Activated CD8-positive, alpha-beta memory T cell treated with anti-CD3 and anti-CD28 coated beads, Interleukin-2, amount 10 ng/mL, durations not matched to agents 7 days and 5 days (primary cell): ENCODE measurements at regions of chr11 and their contacts with region 1.

Region 1: DNA sequence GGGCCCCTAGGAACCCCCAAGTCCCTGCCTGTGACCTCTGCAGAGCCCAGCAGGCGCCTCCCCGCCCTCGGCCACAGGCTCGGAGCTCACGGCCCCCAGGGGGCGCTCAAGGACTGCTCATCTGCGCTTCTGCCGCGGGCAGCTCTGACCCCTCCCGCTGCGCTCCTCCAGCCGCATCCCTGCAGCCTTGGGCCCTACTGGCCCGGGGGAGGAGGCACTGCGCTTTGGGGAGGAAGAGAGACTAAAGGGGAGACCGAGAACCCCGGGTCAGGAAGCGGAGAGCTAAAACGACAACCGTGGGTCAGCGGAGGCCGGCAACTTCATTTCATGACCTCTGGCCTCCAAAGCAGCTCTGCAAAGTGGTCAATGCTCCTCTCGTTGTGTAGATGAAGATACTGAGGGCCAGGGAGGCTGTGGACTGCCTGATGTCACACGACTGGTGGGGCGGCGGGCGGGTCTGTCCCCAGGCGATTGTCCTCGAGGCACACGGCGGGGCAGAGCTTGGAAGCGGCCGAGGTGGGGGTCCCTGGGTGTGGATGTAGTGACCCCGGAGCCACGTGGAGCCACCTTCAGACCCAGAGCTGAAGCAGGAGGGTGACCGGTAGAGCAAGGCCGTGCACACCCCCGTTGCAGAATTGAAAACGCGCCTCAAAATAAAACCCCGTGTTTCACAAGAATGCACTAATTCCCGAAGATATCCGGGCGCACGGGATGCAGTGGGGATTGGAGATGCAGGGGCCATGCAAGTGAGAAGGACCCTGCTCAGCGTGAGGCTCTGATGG is 2.7 kb upstream of the KRTAP5-6 start:
- DNase-seq: peak; percentile 84
- ATAC-seq: peak; percentile 91
- H3K4me3 Mint-ChIP-seq: no peak overlapping the region
- H3K27ac Mint-ChIP-seq: no peak overlapping the region
- H3K4me1 Mint-ChIP-seq: peaks cover 9% of the 10 kb centered on the region
- H3K27me3 Mint-ChIP-seq: peaks cover 57% of the 10 kb centered on the region

Region 2: GRCh38 chr11:1682225-1682905 is 11.9 kb before region 1 on chr11:
- CTCF ChIA-PET with region 1: interaction called, 24 read pairs
- DNase-seq: no peak
- ATAC-seq: no peak
- H3K4me3 Mint-ChIP-seq: no peak overlapping the region
- H3K27ac Mint-ChIP-seq: no peak overlapping the region
- H3K4me1 Mint-ChIP-seq: no peaks in the 10 kb centered on the region
- H3K27me3 Mint-ChIP-seq: peaks cover 6% of the 10 kb centered on the region

Region 3: DNA sequence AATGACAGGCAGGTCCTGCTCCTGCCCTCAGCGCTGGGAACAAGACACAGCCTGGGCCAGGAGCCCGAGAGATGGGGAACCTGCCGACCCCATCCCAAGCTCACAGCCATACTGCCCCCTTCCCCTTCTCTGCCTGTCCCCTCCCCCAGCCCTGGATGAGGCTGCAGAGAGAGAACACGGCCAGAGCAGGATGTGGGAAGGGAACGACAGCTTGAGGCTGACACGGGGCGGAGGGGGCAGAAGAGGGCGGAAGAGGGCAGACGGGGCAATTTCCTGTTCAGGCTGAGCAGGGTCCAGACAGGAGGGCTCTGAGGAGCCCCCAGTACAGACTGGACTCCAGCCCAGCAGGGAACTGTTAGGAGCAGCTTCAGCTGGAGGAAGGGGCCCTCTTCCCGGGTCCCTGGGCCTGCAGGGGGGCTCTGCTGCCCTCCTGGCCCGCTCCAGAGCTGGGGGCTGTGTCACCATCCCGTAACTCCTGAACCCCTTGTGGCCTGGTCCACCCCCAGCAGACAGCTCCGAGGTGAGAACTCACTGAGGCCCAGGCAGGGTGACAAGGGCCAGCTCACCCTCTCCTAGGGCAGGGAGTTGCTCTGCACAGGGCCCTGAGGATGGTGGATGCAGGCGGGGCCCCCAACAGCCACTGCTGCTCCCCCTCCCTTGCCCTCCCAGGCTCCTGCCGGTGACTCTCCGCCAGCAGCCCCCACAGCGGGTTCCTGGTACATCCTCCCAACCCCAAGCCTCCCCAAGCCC is 63.8 kb after region 1 on chr11:
- CTCF ChIA-PET with region 1: interaction called, 26 read pairs
- DNase-seq: peak; percentile 89
- ATAC-seq: peak; percentile 83
- H3K4me3 Mint-ChIP-seq: peak overlapping the region; percentile 67
- H3K27ac Mint-ChIP-seq: peak overlapping the region; percentile 94
- H3K4me1 Mint-ChIP-seq: peaks cover 67% of the 10 kb centered on the region
- H3K27me3 Mint-ChIP-seq: no peaks in the 10 kb centered on the region

Region 4: DNA sequence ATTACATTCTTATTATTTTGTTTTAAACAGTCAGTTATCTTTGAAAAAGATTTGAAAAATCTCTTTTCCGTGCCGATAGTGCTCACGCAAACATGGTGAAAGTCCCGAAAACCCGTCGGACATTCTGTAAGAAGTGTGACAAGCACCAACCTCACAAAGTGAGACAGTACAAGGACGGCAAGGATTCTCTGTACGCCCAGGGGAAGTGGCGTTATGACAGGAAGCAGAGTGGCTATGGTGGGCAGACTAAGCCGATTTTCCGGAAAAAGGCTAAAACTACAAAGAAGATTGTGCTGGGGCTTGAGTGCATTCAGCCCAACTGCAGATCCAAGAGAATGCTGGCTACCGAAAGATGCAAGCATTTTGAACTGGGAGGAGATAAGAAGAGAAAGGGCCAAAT is 98.2 kb after region 1 on chr11:
- CTCF ChIA-PET with region 1: interaction called, 13 read pairs
- DNase-seq: peak; percentile 70
- ATAC-seq: peak; percentile 57
- H3K4me3 Mint-ChIP-seq: peak overlapping the region; percentile 49
- H3K27ac Mint-ChIP-seq: peak overlapping the region; percentile 91
- H3K4me1 Mint-ChIP-seq: peaks cover 21% of the 10 kb centered on the region
- H3K27me3 Mint-ChIP-seq: peaks cover 34% of the 10 kb centered on the region

Region 5: GRCh38 chr11:1837171-1838076 is 143.2 kb after region 1 on chr11:
- CTCF ChIA-PET with region 1: interaction called, 533 read pairs
- DNase-seq: peak; percentile 92
- ATAC-seq: peak; percentile 91
- H3K4me3 Mint-ChIP-seq: no peak overlapping the region
- H3K27ac Mint-ChIP-seq: no peak overlapping the region
- H3K4me1 Mint-ChIP-seq: peaks cover 8% of the 10 kb centered on the region
- H3K27me3 Mint-ChIP-seq: peaks cover 7% of the 10 kb centered on the region

Region 6: DNA sequence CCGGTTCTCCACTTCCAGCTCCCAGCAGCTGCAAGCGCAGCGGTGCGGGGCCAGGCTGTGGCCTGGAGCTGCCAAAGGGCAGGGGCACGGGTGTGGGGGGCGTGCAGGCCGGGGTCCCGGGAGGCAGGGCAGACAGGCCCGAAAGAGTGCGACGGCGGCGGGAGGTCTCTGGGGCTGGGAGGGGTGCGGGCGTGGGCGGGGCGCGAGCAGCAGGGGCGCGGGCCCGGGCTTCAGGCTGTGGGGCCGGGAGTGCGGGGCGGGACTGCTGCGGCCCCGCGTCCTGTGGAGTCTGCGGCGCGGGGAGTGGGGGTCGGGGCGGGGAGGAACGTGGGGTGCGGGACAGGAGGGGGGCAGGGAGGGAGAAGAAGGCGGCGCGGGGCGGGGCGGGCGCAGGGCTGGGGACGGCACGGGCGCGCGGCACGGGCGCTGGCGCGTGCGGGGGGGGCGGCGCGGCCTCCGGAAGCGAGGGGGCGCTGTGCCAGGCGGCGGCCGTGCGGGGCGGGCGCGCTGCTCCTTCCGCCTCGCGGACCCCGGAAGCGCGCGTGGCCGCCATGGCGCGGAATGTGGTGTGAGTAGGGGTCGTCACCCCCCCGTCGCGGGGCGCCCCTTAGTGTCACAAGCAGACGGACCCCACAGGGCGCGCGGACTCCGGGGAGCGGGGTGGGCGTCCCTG is 252.7 kb after region 1 on chr11 and contains the start of gene MRPL23:
- CTCF ChIA-PET with region 1: interaction called, 12 read pairs
- DNase-seq: no peak
- ATAC-seq: peak; percentile 81
- H3K4me3 Mint-ChIP-seq: no peak within 1 kb of the TSS
- H3K27ac Mint-ChIP-seq: no peak within 1 kb of the TSS
- H3K4me1 Mint-ChIP-seq: no peaks in the 10 kb centered on the region
- H3K27me3 Mint-ChIP-seq: no peaks in the 10 kb centered on the region
- total RNA-seq, gene MRPL23: 109 to 114 TPM